ENCODE measurements at regions of chr1 and their contacts with region 1.

Region 1: GRCh38 chr1:39410915-39411436 is 80.5 kb upstream of the BMP8A start:
- DNase-seq: peak; percentile 92

Region 2: DNA sequence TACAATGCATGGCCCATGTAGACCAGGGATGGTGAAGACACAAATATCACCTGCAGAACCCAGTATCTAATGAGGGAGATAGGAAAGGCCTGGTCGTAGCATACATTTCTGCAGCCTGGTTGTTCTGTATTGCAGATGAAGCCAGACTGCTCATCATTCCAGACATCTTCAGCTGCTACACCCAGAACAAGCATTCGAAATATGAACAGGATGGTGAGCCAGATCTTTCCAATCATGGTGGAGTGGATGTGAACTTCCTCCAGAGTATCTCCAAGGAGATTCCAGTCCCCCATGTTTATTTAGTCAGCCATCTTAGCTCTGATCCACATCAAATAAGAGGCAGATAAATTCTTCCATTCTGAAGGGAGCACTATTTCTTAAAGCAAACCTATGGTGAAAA is 535.2 kb before region 1 on chr1:
- intact Hi-C with region 1: loop called in 1 of 2 experiments (anchors 5 kb)
- DNase-seq: no peak